GM12878 (cell line): ENCODE measurements at regions of chr5 and their contacts with region 1.

Region 1: GRCh38 chr5:132639706-132640130 is 18.3 kb upstream of the IL13 start:
- DNase-seq: peak; percentile 82
- ATAC-seq: peak; percentile 78
- H3K4me3 ChIP-seq: no peak overlapping the region
- H3K27ac ChIP-seq: peak overlapping the region; percentile 28
- H3K4me1 ChIP-seq: peaks cover 59% of the 10 kb centered on the region
- H3K27me3 ChIP-seq: no peaks in the 10 kb centered on the region
- CTCF ChIP-seq: no peak
- EP300 ChIP-seq: peak in 1 of 2 experiments; percentile 70; a peak in 2 of 4 replicates
- POLR2A ChIP-seq: no peak
- RAD21 ChIP-seq: no peak

Region 2: DNA sequence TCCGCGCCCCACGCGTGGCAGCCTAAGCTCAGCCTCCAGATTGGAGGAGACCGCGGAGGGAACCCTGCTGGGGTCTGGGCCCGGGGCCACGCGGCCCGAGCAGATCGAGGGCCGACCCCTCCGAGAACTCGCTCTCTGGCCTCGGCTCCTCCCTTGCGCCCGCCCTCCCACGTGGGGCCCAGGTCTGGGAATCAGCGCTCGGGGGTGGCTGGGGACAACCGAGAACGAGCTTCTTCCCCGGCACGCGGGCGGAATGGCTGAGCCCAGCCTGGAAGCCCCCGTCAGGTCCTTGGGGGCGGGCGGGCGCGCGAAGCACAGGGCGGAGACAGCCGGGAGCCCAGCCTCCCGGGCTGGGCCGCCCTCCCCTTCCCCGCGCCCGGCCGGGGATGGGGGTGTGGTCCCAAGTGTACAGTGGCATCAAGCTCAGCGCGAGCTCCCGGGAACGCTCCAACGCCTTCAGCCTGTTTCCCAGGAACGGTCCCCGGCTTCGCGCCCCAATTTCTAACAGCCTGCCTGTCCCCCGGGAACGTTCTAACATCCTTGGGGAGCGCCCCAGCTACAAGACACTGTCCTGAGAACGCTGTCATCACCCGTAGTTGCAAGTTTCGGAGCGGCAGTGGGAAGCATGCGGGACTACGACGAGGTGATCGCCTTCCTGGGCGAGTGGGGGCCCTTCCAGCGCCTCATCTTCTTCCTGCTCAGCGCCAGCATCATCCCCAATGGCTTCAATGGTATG is 345.6 kb before region 1 on chr5 and contains the start of gene SLC22A4:
- CTCF ChIA-PET with region 1: no interaction called
- POLR2A ChIA-PET with region 1: no interaction called
- RAD21 ChIA-PET with region 1: no interaction called
- SMC1A ChIA-PET with region 1: no interaction called
- in situ Hi-C with region 1: no loop called
- intact Hi-C with region 1: no loop called
- DNase-seq: no peak
- ATAC-seq: peak; percentile 88
- H3K4me3 ChIP-seq: peak within 1 kb of the TSS; percentile 70
- H3K27ac ChIP-seq: no peak within 1 kb of the TSS
- H3K4me1 ChIP-seq: peaks cover 21% of the 10 kb centered on the region
- H3K27me3 ChIP-seq: peaks cover 4 to 22% of the 10 kb centered on the region in 2 experiments; a peak in 3 of 4 replicates
- CTCF ChIP-seq: no peak
- EP300 ChIP-seq: no peak
- POLR2A ChIP-seq: peak; percentile 33; the same call in 1 of the 2 replicates
- RAD21 ChIP-seq: no peak
- polyA plus RNA-seq, gene SLC22A4: 0.05 TPM in 1 of 2 experiments, not detected in the other

Region 3: DNA sequence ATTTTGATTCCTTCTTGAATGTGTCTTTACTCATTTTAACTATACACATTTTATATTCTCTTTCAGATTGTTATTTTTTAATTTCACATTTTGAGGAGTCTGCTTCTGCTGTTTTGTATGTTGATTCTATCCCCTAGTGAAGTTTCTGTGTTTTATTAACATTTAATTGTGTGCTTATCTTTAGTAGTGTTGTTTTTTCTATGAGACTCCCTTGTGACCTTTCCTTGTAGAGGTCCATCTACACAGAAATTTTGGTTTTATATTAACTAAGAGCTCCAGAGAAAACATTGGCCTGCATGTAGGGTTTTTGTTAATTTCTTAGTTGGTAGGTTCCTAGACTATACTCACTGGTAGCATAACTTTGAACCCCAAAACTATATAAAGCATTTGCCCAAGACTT is 17.1 kb before region 1 on chr5:
- CTCF ChIA-PET with region 1: interaction called, 3 read pairs
- POLR2A ChIA-PET with region 1: interaction called, 6 read pairs
- RAD21 ChIA-PET with region 1: interaction called, 13 read pairs
- SMC1A ChIA-PET with region 1: interaction called, 29 read pairs
- in situ Hi-C with region 1: no loop called
- intact Hi-C with region 1: no loop called
- DNase-seq: no peak
- ATAC-seq: no peak
- H3K4me3 ChIP-seq: no peak overlapping the region
- H3K27ac ChIP-seq: no peak overlapping the region
- H3K4me1 ChIP-seq: 0 out of 2 replicates have a peak, but pooled peaks cover 3% of the 10 kb centered on the region
- H3K27me3 ChIP-seq: no peaks in the 10 kb centered on the region
- CTCF ChIP-seq: no peak
- EP300 ChIP-seq: no peak
- POLR2A ChIP-seq: no peak
- RAD21 ChIP-seq: no peak

Region 4: DNA sequence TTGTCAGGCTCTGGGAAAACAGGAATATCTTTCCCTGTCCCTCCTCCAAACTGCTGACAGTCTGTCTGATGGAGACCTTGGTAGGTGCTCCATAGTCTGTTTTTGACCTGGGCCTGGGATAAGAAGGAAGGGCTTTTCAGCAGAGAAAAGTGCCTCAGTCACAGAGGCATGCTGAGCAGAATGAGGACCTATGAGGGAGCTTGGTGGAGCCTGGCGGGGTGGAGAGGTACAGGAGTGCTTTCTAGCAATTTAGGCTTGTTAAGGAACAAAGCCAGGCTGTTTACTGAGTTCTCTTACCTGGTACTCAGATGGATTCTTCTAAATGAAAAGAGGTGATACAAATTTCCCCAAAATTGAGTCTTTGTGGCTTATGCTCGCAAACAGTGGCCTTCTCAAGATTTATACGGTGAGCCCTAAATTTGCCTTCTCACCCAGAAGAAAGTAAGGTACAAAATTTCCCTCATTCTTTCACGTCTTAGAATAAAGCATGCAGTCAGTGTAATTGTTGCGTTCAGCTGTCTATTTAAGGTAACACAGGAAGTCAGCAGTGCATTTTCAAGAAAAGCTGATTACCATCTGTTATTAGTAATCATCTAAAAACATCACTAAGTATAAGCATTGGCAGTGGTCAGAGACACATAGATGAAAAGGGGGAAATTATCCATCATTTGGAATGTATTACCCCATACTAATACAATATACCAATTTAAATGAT is 10.3 kb before region 1 on chr5:
- CTCF ChIA-PET with region 1: interaction called, 13 read pairs
- POLR2A ChIA-PET with region 1: interaction called, 17 read pairs
- RAD21 ChIA-PET with region 1: interaction called, 25 read pairs
- SMC1A ChIA-PET with region 1: interaction called, 45 read pairs
- in situ Hi-C with region 1: no loop called
- intact Hi-C with region 1: no loop called
- DNase-seq: no peak
- ATAC-seq: peak; percentile 86
- H3K4me3 ChIP-seq: no peak overlapping the region; the same call in 1 of the 2 replicates
- H3K27ac ChIP-seq: peak overlapping the region; percentile 70
- H3K4me1 ChIP-seq: peaks cover 11% of the 10 kb centered on the region; the same call in 1 of the 2 replicates
- H3K27me3 ChIP-seq: no peaks in the 10 kb centered on the region
- CTCF ChIP-seq: no peak
- EP300 ChIP-seq: no peak
- POLR2A ChIP-seq: no peak
- RAD21 ChIP-seq: no peak

Region 5: GRCh38 chr5:132656774-132657355 is 17.1 kb after region 1 on chr5:
- CTCF ChIA-PET with region 1: interaction called, 28 read pairs
- POLR2A ChIA-PET with region 1: interaction called, 53 read pairs
- RAD21 ChIA-PET with region 1: interaction called, 113 read pairs
- SMC1A ChIA-PET with region 1: interaction called, 119 read pairs
- in situ Hi-C with region 1: no loop called
- intact Hi-C with region 1: loop called (anchors 2 kb)
- DNase-seq: no peak
- ATAC-seq: peak; percentile 5; the same call in 1 of the 3 replicates
- H3K4me3 ChIP-seq: 0 out of 2 replicates have a peak overlapping the region, but pooled peaks have one; percentile 47
- H3K27ac ChIP-seq: no peak overlapping the region
- H3K4me1 ChIP-seq: peaks cover 45% of the 10 kb centered on the region
- H3K27me3 ChIP-seq: no peaks in the 10 kb centered on the region
- CTCF ChIP-seq: no peak
- EP300 ChIP-seq: no peak
- POLR2A ChIP-seq: no peak
- RAD21 ChIP-seq: no peak

Region 6: GRCh38 chr5:132979367-132979940 is 339.7 kb after region 1 on chr5:
- CTCF ChIA-PET with region 1: no interaction called
- POLR2A ChIA-PET with region 1: no interaction called
- RAD21 ChIA-PET with region 1: no interaction called
- SMC1A ChIA-PET with region 1: no interaction called
- in situ Hi-C with region 1: no loop called
- intact Hi-C with region 1: no loop called
- DNase-seq: no peak
- ATAC-seq: no peak; the same call in 2 of the 3 replicates
- H3K4me3 ChIP-seq: no peak overlapping the region
- H3K27ac ChIP-seq: no peak overlapping the region
- H3K4me1 ChIP-seq: no peaks in the 10 kb centered on the region
- H3K27me3 ChIP-seq: no peaks in the 10 kb centered on the region
- CTCF ChIP-seq: no peak
- EP300 ChIP-seq: no peak
- POLR2A ChIP-seq: no peak
- RAD21 ChIP-seq: no peak